HepG2 (cell line): ENCODE measurements at regions of chr12 and their contacts with region 1.

Region 1: DNA sequence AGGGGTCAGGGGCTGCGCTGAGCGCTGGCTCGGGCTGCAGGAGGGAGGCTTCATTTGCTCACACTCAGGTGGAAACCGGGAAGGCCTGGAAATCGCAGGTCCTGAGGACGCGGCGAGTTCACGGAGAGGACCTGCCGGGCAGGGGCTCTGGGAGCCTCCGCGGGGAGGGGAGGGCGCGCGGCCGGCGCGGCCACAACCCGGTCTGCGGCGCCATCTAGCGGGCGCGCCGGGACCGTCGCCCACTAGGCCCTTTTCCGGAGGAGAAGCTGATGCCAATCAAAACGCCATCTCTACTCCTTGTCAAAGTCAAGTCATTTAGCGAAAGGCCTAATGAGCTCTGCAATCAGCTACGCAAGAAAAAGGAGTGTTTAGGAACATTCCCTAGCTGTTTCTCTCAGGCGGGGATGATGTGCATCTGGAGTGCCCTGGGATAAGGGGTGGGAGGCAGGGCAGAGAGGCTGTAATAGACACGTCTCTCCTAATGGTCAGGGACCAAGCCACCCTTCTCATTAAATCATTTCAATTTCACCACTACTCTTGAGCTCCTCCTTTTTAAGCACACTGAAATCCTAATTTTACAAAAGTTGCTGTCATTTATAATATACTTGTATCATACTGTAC is 885.8 kb upstream of the TMEM132C start:
- DNase-seq: peak; percentile 15
- ATAC-seq: peak; percentile 99
- H3K4me3 ChIP-seq: peak overlapping the region in 1 of 3 experiments; percentile 29; a peak in 1 of 6 replicates
- H3K27ac ChIP-seq: no peak overlapping the region
- H3K4me1 ChIP-seq: no peaks in the 10 kb centered on the region
- H3K27me3 ChIP-seq: no peaks in the 10 kb centered on the region
- CTCF ChIP-seq: peak; percentile 80
- EP300 ChIP-seq: no peak
- POLR2A ChIP-seq: no peak
- RAD21 ChIP-seq: peak; percentile 91

Region 2: DNA sequence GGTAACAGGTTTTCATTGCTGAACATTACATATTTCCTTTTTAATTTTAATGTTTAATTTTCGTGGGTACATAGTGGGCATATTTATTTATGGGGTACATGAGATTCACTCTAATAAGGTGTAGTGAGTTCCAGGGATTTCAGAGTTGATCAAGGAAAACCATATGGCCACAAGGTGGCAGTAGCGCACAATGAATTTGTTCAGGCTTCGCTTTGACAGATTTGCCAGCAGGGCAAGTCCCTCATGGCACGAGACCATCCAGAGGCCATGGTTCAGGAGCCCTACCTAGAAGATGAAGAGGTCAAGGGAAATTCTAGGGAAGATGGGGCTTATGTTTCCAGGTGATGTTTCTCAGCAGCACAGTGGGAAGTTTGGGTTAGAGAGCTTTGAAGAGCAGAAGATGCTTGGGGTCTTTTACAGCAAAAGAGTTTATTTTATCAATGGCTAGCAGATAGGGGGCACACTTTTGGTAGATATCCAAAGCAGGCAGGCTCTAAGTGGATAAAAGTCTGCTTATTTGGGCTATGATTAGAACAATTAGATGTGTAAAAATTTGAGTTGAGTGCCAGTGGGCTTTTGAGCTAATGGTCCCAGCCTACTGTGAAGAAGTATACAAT is 1311.5 kb before region 1 on chr12:
- CTCF ChIA-PET with region 1: interaction called, 5 read pairs
- POLR2A ChIA-PET with region 1: no interaction called
- in situ Hi-C with region 1: loop called (anchors 10 kb)
- intact Hi-C with region 1: loop called (anchors 2 kb)
- DNase-seq: peak; percentile 33
- ATAC-seq: peak; percentile 43; the same call in 2 of the 3 replicates
- H3K4me3 ChIP-seq: no peak overlapping the region
- H3K27ac ChIP-seq: no peak overlapping the region
- H3K4me1 ChIP-seq: no peaks in the 10 kb centered on the region
- H3K27me3 ChIP-seq: no peaks in the 10 kb centered on the region
- CTCF ChIP-seq: peak; percentile 69
- EP300 ChIP-seq: no peak
- POLR2A ChIP-seq: no peak
- RAD21 ChIP-seq: peak; percentile 59

Region 3: DNA sequence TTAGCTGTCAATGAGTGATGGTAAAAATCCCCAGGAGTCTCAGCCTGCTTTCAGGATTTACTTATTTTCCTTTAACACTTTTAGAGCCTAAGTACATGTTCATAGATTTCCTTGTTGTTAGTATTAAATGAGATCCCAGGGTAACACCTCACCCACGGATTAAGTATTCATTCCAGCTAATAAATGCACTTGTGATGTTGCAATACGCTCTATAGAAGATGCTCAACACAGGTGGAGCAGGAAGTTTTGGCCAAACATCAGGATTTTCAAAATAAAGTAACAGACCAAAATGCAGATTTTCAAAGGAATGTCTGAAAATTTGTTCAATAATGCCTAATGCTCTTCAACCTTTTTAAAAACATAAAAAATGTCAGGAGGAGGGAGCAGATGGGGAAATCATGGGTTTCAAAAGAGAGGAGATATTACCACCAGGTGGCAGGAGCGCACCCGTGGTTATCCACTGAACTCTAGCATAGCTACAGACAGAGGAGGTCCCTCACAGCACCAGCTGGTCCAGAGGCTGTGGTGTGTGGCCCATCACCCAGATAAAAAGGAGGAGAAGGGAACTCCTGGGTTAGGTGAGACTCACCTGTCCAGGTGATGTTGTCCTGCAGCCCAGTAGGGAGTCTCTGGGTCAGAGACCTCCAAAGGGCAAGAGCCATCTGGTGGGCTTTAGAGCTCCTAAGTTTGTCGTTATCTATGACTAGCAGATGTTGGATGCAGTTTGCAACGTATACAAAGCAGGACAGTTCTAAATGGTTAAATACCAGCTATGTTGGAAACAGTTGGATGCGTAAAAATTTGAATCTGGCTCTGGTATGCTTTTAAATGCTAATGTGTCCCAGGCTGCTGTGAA is 272.6 kb before region 1 on chr12:
- CTCF ChIA-PET with region 1: interaction called, 20 read pairs
- POLR2A ChIA-PET with region 1: no interaction called
- in situ Hi-C with region 1: loop called (anchors 25 kb)
- intact Hi-C with region 1: loop called (anchors 1 kb)
- DNase-seq: peak; percentile 15
- ATAC-seq: peak; percentile 90
- H3K4me3 ChIP-seq: no peak overlapping the region
- H3K27ac ChIP-seq: no peak overlapping the region
- H3K4me1 ChIP-seq: no peaks in the 10 kb centered on the region
- H3K27me3 ChIP-seq: no peaks in the 10 kb centered on the region
- CTCF ChIP-seq: peak; percentile 59
- EP300 ChIP-seq: no peak
- POLR2A ChIP-seq: no peak
- RAD21 ChIP-seq: peak; percentile 32; the same call in 1 of the 2 replicates

Region 4: DNA sequence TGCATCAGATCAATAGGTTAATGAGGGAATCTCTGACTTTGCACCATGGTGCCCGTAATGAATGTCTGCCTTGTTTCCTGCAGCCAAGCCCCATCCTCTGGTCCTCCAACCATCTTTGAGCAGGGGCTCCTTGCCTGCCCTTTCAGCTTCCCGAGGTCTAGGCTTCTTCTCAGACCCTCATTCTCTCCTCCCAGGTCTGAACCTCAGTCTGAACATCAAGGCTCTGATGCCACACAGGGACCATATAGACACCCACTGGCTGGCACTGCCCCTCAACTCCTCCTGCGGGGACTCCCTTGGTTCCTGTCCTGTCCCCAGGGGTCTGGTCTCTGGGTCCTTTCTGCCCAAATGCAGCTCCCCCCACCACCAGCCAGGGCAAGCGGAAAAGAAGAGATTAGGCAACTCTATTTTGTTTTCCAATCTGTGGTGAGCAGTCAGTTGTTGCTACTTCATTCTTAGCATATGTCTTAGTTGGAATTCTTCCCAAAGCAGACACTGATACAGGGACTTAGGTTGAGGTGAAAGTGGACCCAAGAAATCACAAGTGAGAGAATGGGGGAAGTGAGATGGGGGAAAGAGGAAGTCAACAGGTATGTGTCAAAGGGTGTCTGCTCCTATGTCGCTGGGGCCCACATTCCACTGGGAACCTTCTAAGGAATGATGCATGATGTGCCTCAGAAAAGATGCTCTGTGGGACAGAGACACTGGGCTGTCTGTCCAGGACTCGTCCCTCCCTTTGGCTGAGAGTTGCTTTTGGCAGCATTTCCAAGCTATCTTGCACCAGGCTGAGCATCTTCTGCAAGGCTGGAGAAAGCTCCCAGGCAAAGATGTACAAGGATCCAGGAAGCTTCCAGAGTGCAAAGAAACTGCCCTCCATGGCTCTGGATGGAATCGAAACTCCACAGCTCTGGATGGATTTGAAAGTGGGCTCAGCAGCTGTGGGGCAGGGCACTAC is 210.7 kb before region 1 on chr12:
- CTCF ChIA-PET with region 1: no interaction called
- POLR2A ChIA-PET with region 1: no interaction called
- in situ Hi-C with region 1: no loop called
- intact Hi-C with region 1: no loop called
- DNase-seq: no peak
- ATAC-seq: no peak
- H3K4me3 ChIP-seq: no peak overlapping the region
- H3K27ac ChIP-seq: no peak overlapping the region
- H3K4me1 ChIP-seq: no peaks in the 10 kb centered on the region
- H3K27me3 ChIP-seq: no peaks in the 10 kb centered on the region
- CTCF ChIP-seq: no peak
- EP300 ChIP-seq: no peak
- POLR2A ChIP-seq: no peak
- RAD21 ChIP-seq: no peak

Region 5: GRCh38 chr12:127280393-127281275 is 100.5 kb before region 1 on chr12:
- CTCF ChIA-PET with region 1: interaction called, 10 read pairs
- POLR2A ChIA-PET with region 1: no interaction called
- in situ Hi-C with region 1: no loop called
- intact Hi-C with region 1: loop called (anchors 1 kb)
- DNase-seq: peak; percentile 4
- ATAC-seq: peak; percentile 91
- H3K4me3 ChIP-seq: no peak overlapping the region
- H3K27ac ChIP-seq: no peak overlapping the region
- H3K4me1 ChIP-seq: no peaks in the 10 kb centered on the region
- H3K27me3 ChIP-seq: 0 out of 5 replicates have a peak, but pooled peaks cover 0 to 2% of the 10 kb centered on the region in 2 experiments
- CTCF ChIP-seq: peak; percentile 90
- EP300 ChIP-seq: no peak
- POLR2A ChIP-seq: no peak
- RAD21 ChIP-seq: peak; percentile 62

Region 6: DNA sequence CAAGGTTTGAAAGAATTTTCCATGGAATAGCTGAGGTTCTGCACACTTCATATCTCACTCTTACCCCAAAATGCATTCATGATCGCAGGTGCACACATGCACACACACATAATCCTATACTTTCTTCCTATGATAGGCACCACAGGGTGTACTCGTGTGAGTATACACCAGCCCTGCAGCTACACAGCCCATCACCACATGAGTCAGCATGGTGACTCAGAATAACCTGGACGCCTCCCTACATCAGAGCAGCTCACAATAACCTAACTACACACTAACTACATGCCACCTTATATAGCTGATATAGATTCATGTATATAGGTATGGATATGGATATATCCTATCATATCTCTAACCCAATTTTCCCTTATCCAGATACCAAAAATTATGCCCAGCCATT is 35.6 kb after region 1 on chr12:
- CTCF ChIA-PET with region 1: no interaction called
- POLR2A ChIA-PET with region 1: no interaction called
- in situ Hi-C with region 1: no loop called
- intact Hi-C with region 1: no loop called
- DNase-seq: no peak
- ATAC-seq: no peak
- H3K4me3 ChIP-seq: no peak overlapping the region
- H3K27ac ChIP-seq: no peak overlapping the region
- H3K4me1 ChIP-seq: no peaks in the 10 kb centered on the region
- H3K27me3 ChIP-seq: no peaks in the 10 kb centered on the region
- CTCF ChIP-seq: no peak
- EP300 ChIP-seq: no peak
- POLR2A ChIP-seq: no peak
- RAD21 ChIP-seq: no peak